Activated CD4-positive, alpha-beta memory T cell treated with anti-CD3 and anti-CD28 coated beads for 36 hours (primary cell): ENCODE measurements at regions of chr16 and their contacts with region 1.

Region 1: DNA sequence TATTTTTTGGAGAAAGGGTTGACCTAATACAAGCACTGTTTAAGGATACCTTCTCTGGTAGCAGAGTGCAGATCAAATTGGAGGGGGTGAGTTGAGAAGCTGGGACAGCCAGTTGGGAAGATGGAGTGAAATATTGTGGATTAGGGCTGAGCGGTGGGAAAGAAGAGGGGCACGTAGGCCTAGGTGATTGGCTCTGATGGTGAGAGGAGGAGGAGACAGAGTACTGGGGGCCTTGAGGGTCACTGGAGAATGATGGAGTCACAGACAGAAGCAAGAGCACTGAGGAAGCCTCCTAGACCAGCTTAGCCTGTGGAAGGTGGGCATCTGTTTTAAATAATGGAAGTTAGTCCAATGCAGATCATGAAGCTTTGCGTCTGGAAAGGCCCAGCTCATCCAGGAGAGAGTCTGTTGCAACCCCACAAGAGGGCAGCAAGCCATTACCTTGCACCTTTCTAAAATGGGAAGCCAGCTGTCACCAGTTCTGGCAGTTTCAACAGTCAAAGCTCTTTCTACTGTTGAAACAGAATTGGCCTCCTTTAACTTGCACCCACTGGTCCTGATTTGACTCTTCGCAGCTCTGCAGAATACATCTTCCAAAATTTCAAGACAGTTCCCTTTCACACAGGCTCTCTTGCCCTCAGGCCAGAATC is 11.8 kb downstream of the SLC9A5 start:
- DNase-seq: peak; percentile 55
- H3K4me3 Mint-ChIP-seq: no peak overlapping the region
- H3K27ac Mint-ChIP-seq: no peak overlapping the region
- H3K4me1 Mint-ChIP-seq: peaks cover 3% of the 10 kb centered on the region
- H3K27me3 Mint-ChIP-seq: peaks cover 16% of the 10 kb centered on the region

Region 2: DNA sequence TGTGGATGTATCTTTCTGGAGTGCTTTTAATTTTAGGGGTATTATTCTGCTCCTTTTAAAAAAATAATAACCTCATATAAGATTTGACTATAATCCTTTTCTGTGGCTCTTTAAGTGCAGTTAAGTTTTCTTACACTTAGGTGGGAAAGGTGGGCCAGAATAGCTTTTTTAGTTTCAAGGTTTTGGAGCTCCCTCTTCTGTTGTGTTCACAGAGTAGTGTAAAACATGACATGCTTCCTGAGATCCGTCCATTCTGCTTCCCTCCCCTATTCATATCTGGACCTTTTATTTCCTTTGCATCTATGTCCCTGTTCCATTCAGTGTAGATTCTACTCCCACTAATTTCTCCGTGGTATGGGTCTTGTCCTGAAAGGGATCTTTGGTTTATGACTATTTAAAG is 78.9 kb after region 1 on chr16:
- CTCF ChIA-PET with region 1: interaction called, 16 read pairs
- POLR2A ChIA-PET with region 1: no interaction called
- intact Hi-C with region 1: no loop called
- DNase-seq: no peak
- H3K4me3 Mint-ChIP-seq: no peak overlapping the region
- H3K27ac Mint-ChIP-seq: no peak overlapping the region
- H3K4me1 Mint-ChIP-seq: no peaks in the 10 kb centered on the region
- H3K27me3 Mint-ChIP-seq: peaks cover 6% of the 10 kb centered on the region

Region 3: DNA sequence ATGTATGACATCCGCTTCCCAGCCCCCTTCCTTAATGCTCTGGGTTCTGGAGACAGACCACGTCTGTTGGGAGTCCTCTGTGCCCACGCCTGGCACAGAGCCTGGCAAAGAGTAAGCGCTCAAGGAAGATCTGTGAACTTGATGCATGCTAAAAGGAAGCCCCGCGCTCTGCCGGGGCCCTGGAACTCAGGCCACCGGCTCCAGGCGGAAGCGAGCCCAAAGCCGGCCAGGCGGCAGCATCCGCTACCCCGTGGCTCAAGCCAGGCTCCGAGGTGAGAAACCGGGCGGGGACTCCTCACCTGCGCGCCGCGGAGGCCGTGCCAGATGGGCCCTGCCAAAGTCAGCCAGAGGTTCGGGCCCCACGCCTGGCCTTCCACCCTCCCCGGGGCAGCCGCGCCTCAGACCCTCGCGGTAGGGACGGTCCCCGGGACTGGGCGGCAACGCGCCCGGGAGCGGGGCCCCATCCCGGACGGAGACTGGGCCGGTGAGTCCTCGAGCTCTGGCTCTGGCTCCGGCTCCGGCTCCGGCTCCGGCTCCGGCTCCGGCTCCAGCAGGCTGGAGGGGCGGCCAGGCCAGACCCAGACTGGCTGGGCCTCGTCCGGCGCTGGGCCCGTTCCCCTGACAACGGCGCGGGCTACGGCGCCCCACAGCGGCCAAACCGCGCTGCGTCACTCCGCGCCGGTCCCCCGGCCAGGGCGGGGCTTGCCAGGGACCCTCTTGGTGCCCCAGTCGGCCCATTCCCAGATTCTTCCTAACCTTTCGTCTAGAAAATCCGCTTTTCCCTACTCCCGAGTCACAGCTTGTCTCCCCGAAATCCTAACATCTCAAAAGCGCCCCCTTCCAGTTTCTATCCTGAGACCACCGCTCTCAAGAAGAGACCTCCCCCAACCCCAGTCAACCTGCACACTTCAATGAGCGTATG is 155.6 kb after region 1 on chr16 and contains the start of gene ZDHHC1:
- CTCF ChIA-PET with region 1: interaction called, 10 read pairs
- POLR2A ChIA-PET with region 1: no interaction called
- intact Hi-C with region 1: no loop called
- DNase-seq: peak; percentile 66
- H3K4me3 Mint-ChIP-seq: peak within 1 kb of the TSS; percentile 53
- H3K27ac Mint-ChIP-seq: no peak within 1 kb of the TSS
- H3K4me1 Mint-ChIP-seq: peaks cover 3% of the 10 kb centered on the region
- H3K27me3 Mint-ChIP-seq: peaks cover 29% of the 10 kb centered on the region
- total RNA-seq, gene ZDHHC1: 0.57 to 0.68 TPM

Region 4: DNA sequence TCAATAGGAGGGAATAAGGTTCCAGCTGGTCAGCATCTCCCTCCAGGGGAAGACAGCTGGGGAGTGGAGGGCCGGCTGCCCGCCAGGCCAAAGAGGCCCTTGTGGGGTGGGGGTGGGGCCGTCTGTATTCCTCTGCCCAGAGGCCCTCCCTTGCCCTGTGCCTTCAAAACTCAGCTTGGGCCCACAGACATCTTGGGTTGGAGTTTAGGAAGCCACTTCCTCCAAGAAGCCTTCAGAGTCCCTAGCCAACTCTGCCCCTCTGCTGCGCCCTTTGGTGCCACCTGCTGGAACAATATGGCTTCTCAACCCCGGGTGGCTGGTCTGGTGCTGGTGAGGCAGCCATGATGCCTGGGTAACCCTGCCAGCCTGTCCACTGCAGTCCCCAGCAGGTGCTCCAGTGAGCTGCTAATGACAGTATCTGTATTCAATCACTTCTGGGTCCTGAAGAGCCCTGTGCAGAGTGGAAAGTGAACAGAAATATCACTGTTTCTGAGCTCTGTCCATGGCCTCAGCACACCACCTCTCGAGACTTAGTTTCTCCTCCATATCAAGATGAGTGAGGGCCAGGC is 187.0 kb after region 1 on chr16:
- CTCF ChIA-PET with region 1: interaction called, 10 read pairs
- POLR2A ChIA-PET with region 1: no interaction called
- intact Hi-C with region 1: no loop called
- DNase-seq: peak; percentile 87
- H3K4me3 Mint-ChIP-seq: no peak overlapping the region
- H3K27ac Mint-ChIP-seq: no peak overlapping the region
- H3K4me1 Mint-ChIP-seq: no peaks in the 10 kb centered on the region
- H3K27me3 Mint-ChIP-seq: no peaks in the 10 kb centered on the region